ENCODE measurements at regions of chr1 and their contacts with region 1.

Region 1: DNA sequence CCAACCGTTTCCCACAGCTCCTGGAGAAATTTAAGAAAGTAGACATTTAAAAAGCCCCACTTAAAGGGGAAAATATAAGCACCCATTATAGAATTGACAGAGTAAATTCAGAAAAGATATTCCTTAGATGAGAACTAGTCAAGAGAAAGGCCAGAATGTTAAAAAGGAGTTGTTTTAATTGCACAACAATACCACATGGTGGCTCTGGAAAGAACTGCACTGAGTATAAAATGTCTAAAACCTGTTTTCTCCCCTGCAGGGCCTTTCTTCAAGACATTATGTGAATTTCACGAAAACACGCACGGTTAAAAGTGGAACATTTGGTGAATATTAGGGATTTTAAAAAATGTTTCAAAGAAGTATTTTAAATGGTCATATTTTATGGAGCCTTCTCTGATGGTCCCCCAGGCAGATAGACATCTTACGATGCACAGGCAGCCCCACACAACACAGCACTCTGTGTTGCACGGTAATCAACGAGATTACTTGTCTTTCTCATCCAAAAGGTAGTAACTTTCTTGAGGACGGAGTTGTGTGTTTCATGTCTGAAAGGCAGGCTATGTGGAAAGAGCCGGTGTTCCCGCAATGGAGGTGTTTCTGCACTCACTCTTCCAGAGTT is 101.9 kb downstream of the PRRX1 start:
- DNase-seq: no peak
- ATAC-seq: peak; percentile 63; the same call in 2 of the 3 replicates
- H3K4me3 ChIP-seq: no peak overlapping the region
- H3K27ac ChIP-seq: no peak overlapping the region
- H3K4me1 ChIP-seq: no peaks in the 10 kb centered on the region
- H3K27me3 ChIP-seq: no peaks in the 10 kb centered on the region
- CTCF ChIP-seq: peak in 1 of 3 experiments; percentile 48; a peak in 1 of 6 replicates
- EP300 ChIP-seq: no peak
- POLR2A ChIP-seq: no peak
- RAD21 ChIP-seq: 0 out of 2 replicates have a peak, but pooled peaks have one; percentile 32

Region 2: GRCh38 chr1:169928438-169929209 is 837.2 kb before region 1 on chr1:
- CTCF ChIA-PET with region 1: interaction called, 8 read pairs
- POLR2A ChIA-PET with region 1: no interaction called
- RAD21 ChIA-PET with region 1: interaction called, 3 read pairs
- SMC1A ChIA-PET with region 1: interaction called, 5 read pairs
- in situ Hi-C with region 1: no loop called
- intact Hi-C with region 1: loop called (anchors 2 kb)
- DNase-seq: no peak
- ATAC-seq: peak; percentile 82
- H3K4me3 ChIP-seq: no peak overlapping the region
- H3K27ac ChIP-seq: no peak overlapping the region
- H3K4me1 ChIP-seq: peaks cover 6% of the 10 kb centered on the region
- H3K27me3 ChIP-seq: no peaks in the 10 kb centered on the region
- CTCF ChIP-seq: peak; percentile 53 to 73 (median 70)
- EP300 ChIP-seq: no peak
- POLR2A ChIP-seq: no peak
- RAD21 ChIP-seq: peak; percentile 88

Region 3: GRCh38 chr1:170010443-170010842 is 755.4 kb before region 1 on chr1:
- CTCF ChIA-PET with region 1: interaction called, 5 read pairs
- POLR2A ChIA-PET with region 1: no interaction called
- RAD21 ChIA-PET with region 1: no interaction called
- SMC1A ChIA-PET with region 1: interaction called, 11 read pairs
- in situ Hi-C with region 1: no loop called
- intact Hi-C with region 1: no loop called
- DNase-seq: no peak
- ATAC-seq: peak; percentile 53; the same call in 2 of the 3 replicates
- H3K4me3 ChIP-seq: no peak overlapping the region
- H3K27ac ChIP-seq: no peak overlapping the region
- H3K4me1 ChIP-seq: no peaks in the 10 kb centered on the region
- H3K27me3 ChIP-seq: no peaks in the 10 kb centered on the region
- CTCF ChIP-seq: peak; percentile 13 to 46 (median 25); a peak in 3 of 6 replicates
- EP300 ChIP-seq: no peak
- POLR2A ChIP-seq: no peak
- RAD21 ChIP-seq: peak; percentile 84

Region 4: DNA sequence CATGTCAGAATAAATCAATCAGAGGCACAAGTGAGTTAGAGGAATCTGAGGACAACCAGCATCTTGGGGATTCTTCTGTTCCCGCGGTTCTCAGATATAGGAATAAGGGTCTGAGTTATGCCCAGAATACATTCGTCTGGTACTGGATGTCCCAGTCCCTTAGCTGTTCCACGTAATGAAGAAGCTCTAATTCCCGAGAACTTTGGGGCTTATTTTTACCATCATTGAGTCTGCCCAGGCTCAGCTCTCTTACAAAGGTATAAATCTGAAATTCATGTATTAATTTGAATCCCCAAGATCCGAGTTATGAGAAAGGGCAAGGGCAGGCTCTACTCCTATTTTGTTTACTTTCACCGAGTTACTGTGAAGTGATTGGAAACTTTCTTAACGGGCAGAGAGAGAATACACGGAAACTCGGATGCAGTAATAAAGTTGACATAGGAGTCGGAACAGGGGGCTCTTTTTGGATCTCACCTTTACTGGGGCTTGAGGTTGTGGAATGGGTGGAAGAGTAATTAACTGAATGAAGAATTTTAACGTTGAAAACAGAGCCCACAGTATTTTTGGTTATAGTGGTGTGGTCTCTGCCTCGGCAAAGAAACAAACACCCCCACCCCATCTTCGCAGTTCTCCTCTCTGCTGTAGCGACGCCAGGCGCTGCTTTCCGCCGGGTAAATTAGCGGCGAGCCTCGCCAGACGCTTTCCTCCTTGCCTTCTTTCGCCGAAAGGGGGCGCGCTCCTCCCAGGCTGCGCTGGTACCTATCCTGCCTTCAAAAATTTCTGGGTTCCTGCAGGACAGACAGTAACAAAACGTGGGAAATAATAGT is 94.8 kb before region 1 on chr1:
- CTCF ChIA-PET with region 1: interaction called, 12 read pairs
- POLR2A ChIA-PET with region 1: no interaction called
- RAD21 ChIA-PET with region 1: interaction called, 15 read pairs
- SMC1A ChIA-PET with region 1: interaction called, 16 read pairs
- in situ Hi-C with region 1: no loop called
- intact Hi-C with region 1: no loop called
- DNase-seq: no peak
- ATAC-seq: peak; percentile 74
- H3K4me3 ChIP-seq: no peak overlapping the region
- H3K27ac ChIP-seq: no peak overlapping the region
- H3K4me1 ChIP-seq: no peaks in the 10 kb centered on the region
- H3K27me3 ChIP-seq: peaks cover 3 to 13% of the 10 kb centered on the region in 2 experiments; a peak in 3 of 4 replicates
- CTCF ChIP-seq: peak; percentile 54 to 65 (median 55)
- EP300 ChIP-seq: no peak
- POLR2A ChIP-seq: no peak
- RAD21 ChIP-seq: peak; percentile 51

Region 5: GRCh38 chr1:170685166-170685565 is 80.7 kb before region 1 on chr1:
- CTCF ChIA-PET with region 1: interaction called, 28 read pairs
- POLR2A ChIA-PET with region 1: no interaction called
- RAD21 ChIA-PET with region 1: interaction called, 10 read pairs
- SMC1A ChIA-PET with region 1: interaction called, 26 read pairs
- in situ Hi-C with region 1: no loop called
- intact Hi-C with region 1: no loop called
- DNase-seq: no peak
- ATAC-seq: no peak
- H3K4me3 ChIP-seq: no peak overlapping the region
- H3K27ac ChIP-seq: no peak overlapping the region
- H3K4me1 ChIP-seq: no peaks in the 10 kb centered on the region
- H3K27me3 ChIP-seq: no peaks in the 10 kb centered on the region
- CTCF ChIP-seq: no peak
- EP300 ChIP-seq: no peak
- POLR2A ChIP-seq: no peak
- RAD21 ChIP-seq: no peak

Region 6: DNA sequence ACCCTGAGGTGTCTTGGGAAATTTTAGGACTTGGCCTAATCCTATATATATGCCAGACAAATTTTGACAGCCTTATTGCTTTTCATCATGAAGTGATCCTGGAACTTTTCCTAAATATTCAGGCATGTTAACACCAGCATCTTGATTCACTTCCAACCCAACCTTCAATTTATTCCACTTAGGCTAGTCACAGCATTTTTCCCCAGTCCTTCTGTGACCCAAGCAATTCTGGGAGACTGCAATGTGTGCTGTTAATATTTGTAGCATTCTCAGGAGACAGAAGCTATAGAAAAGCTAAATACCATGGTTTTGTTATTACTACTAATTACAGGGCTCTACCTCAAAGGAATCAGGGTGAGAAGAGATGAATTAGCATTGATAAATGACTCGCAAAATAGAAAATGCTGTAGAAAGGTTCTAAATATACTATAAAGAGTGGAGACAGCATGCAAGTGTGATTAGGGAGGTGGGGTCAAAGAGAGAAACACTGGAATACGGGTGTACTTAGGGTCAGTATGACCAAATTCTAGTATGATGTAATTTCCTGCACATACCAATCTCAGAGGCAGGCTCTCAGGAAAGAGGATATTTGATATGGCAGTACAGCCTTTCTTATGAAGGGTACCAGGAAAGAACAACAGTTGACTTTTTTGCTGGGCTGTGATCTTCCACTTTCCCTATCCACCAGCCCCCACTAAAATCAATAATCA is 72.8 kb before region 1 on chr1:
- CTCF ChIA-PET with region 1: interaction called, 28 read pairs
- POLR2A ChIA-PET with region 1: no interaction called
- RAD21 ChIA-PET with region 1: interaction called, 10 read pairs
- SMC1A ChIA-PET with region 1: interaction called, 26 read pairs
- in situ Hi-C with region 1: no loop called
- intact Hi-C with region 1: no loop called
- DNase-seq: no peak
- ATAC-seq: no peak
- H3K4me3 ChIP-seq: no peak overlapping the region
- H3K27ac ChIP-seq: no peak overlapping the region
- H3K4me1 ChIP-seq: no peaks in the 10 kb centered on the region
- H3K27me3 ChIP-seq: no peaks in the 10 kb centered on the region
- CTCF ChIP-seq: no peak
- EP300 ChIP-seq: no peak
- POLR2A ChIP-seq: no peak
- RAD21 ChIP-seq: no peak

Region 7: DNA sequence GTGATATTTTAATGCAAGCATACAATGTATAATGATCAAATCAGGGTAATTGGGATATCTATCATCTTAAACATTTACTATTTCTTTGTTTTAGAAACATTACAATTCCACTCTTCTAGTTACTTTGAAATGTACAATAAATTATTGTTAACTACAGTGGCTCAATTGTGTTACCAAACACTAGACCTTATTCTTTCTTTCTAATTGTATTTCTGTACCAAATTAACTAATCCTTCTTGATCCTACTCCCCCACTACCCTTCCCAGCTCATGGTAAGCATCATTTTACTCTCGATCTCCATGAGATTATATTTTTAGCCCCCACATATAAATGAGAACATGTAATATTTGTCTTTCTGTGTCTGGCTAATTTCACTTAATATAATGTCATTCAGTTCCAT is 74.5 kb after region 1 on chr1:
- CTCF ChIA-PET with region 1: no interaction called
- POLR2A ChIA-PET with region 1: no interaction called
- RAD21 ChIA-PET with region 1: no interaction called
- SMC1A ChIA-PET with region 1: no interaction called
- in situ Hi-C with region 1: no loop called
- intact Hi-C with region 1: no loop called
- DNase-seq: no peak
- ATAC-seq: no peak
- H3K4me3 ChIP-seq: no peak overlapping the region
- H3K27ac ChIP-seq: no peak overlapping the region
- H3K4me1 ChIP-seq: no peaks in the 10 kb centered on the region
- H3K27me3 ChIP-seq: no peaks in the 10 kb centered on the region
- CTCF ChIP-seq: no peak
- EP300 ChIP-seq: no peak
- POLR2A ChIP-seq: no peak
- RAD21 ChIP-seq: no peak

Region 8: DNA sequence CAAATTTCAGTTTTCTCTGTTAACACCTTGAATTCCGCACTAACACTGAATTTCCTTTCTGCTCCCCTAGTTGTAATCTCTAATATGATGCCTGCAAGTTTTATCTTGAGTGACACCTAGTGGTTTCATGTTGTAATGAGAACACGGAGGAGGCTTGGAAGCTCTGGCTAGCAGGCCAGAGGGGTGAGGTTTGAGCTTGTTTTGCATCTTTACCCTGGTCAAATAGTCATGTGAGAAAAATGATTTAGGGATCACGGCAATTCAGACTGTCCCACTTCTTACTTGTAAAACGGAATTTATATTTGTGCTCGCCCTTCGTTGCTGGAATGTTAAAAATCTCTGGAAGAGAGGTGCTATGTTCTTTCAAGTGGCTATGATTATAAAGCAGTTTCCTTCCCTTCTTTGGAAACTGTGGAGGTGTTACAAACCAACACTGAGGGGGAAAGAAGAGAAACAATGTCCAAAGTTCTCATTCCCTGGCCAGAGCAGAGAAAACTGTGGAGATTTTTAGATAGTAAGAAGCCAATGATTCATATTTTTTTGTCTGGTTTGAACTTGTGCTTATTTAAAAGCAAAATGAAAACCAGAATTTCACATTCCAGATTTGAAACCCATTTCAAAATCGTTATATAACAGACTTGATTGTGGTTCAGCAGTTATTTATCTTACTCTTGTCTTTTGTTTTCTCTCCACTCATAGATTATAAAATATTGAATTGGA is 164.2 kb after region 1 on chr1:
- CTCF ChIA-PET with region 1: interaction called, 6 read pairs
- POLR2A ChIA-PET with region 1: no interaction called
- RAD21 ChIA-PET with region 1: no interaction called
- SMC1A ChIA-PET with region 1: interaction called, 4 read pairs
- in situ Hi-C with region 1: no loop called
- intact Hi-C with region 1: loop called (anchors 5 kb)
- DNase-seq: peak; percentile 11
- ATAC-seq: peak; percentile 94
- H3K4me3 ChIP-seq: no peak overlapping the region
- H3K27ac ChIP-seq: no peak overlapping the region
- H3K4me1 ChIP-seq: peaks cover 5% of the 10 kb centered on the region; the same call in 1 of the 2 replicates
- H3K27me3 ChIP-seq: no peaks in the 10 kb centered on the region
- CTCF ChIP-seq: peak; percentile 68 to 73 (median 68)
- EP300 ChIP-seq: no peak
- POLR2A ChIP-seq: no peak
- RAD21 ChIP-seq: peak; percentile 86

Region 9: GRCh38 chr1:171019971-171020370 is 254.2 kb after region 1 on chr1:
- CTCF ChIA-PET with region 1: no interaction called
- POLR2A ChIA-PET with region 1: no interaction called
- RAD21 ChIA-PET with region 1: no interaction called
- SMC1A ChIA-PET with region 1: no interaction called
- in situ Hi-C with region 1: no loop called
- intact Hi-C with region 1: no loop called
- DNase-seq: no peak
- ATAC-seq: no peak
- H3K4me3 ChIP-seq: no peak overlapping the region
- H3K27ac ChIP-seq: no peak overlapping the region
- H3K4me1 ChIP-seq: no peaks in the 10 kb centered on the region
- H3K27me3 ChIP-seq: no peaks in the 10 kb centered on the region
- CTCF ChIP-seq: no peak
- EP300 ChIP-seq: no peak
- POLR2A ChIP-seq: no peak
- RAD21 ChIP-seq: no peak